ENCODE measurements at regions of chr10 and their contacts with region 1.

Region 1: DNA sequence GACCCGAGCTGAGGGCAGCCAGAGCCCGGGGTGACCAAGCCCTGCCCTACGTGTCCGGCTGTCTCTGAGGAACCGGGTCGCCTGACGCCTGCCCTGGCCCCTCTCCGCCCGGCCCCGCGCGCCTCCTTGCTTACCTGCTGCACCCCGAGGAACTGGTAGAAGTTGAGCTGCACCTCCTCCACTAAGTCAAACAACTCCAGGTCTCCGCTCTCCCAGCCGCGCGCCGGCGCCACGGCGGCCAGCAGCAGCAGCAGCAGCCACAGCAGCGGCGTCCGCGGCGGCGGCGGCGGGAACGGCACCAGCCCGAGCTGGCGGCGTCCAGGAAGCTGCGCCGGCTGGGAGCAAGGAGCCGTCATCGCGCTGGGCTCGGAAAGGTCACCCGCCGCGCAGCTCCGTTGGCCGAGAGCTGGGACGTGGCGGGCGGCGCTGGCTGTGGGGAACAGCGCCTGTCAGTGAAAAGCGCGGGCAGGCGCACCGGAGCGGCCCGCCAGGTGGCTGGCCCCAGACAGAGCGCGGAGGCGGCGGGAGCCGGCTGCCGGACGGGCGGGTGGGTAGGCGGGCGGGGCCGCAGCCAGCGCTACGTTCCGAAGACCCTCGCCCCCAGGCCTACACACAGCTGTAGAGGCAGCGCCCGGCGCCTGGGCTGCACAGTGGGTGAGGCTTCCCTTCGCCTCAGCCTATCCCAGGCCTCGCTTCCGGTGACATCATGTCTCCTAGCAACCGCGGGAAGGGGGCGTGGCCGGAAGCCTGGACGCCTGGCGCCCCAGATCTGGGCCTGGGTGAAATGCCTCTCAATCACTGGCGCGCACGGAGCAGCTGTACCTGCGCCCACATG is at the start of gene DNAJC1:
- DNase-seq: peak; percentile 97
- ATAC-seq: peak; percentile 93
- H3K4me3 ChIP-seq: peak within 1 kb of the TSS; percentile 57 to 90 (median 79)
- H3K4me3 Mint-ChIP-seq: peak within 1 kb of the TSS; percentile 90
- H3K27ac ChIP-seq: peak within 1 kb of the TSS; percentile 84
- H3K27ac Mint-ChIP-seq: peak within 1 kb of the TSS; percentile 91
- H3K4me1 ChIP-seq: peaks cover 30 to 31% of the 10 kb centered on the region in 2 donors
- H3K4me1 Mint-ChIP-seq: peaks cover 40% of the 10 kb centered on the region
- H3K27me3 ChIP-seq: no peaks in the 10 kb centered on the region
- H3K27me3 Mint-ChIP-seq: no peaks in the 10 kb centered on the region
- CTCF ChIP-seq: peak; percentile 31
- total RNA-seq, gene DNAJC1: 15.4 and 16.1 TPM in 2 replicates

Region 2: DNA sequence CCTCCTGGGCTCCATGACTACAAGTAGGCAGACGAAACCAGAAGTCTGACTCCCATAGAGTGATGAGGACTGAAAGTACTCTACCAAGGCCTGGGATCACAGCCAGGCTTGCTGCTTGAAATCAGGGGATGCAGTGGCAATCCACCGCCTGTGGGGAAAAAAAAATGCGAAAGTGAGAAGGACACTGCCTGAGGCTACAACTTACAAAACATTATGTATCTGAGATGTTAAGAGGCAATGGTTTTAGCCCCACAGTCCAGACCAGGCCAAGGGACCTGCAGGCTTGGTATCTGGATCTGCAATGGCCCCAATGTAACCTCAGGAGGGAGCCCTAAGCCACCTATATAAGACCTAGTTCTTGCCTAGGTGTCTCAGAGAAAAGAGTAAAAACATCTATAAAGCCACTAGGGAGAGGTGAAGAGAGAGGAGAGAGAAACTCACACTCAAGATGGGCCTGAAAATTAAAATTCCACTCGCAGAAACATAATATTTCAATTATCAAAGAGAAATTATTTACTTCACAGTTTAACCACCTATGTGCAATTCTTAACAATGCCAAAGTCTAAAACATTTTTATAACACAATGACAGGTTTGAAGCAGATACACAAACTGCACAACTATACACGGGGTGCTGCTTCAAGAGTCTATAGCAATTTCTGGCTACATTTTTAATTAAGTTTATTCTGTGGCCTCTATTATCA is 13.7 kb before region 1 on chr10:
- CTCF ChIA-PET with region 1: interaction called, 65 read pairs
- POLR2A ChIA-PET with region 1: no interaction called
- intact Hi-C with region 1: no loop called
- DNase-seq: peak; percentile 47
- ATAC-seq: peak; percentile 76
- H3K4me3 ChIP-seq: no peak overlapping the region
- H3K4me3 Mint-ChIP-seq: no peak overlapping the region
- H3K27ac ChIP-seq: no peak overlapping the region
- H3K27ac Mint-ChIP-seq: no peak overlapping the region
- H3K4me1 ChIP-seq: no peaks in the 10 kb centered on the region
- H3K4me1 Mint-ChIP-seq: peaks cover 4% of the 10 kb centered on the region
- H3K27me3 ChIP-seq: no peaks in the 10 kb centered on the region
- H3K27me3 Mint-ChIP-seq: no peaks in the 10 kb centered on the region
- CTCF ChIP-seq: peak; percentile 46

Region 3: DNA sequence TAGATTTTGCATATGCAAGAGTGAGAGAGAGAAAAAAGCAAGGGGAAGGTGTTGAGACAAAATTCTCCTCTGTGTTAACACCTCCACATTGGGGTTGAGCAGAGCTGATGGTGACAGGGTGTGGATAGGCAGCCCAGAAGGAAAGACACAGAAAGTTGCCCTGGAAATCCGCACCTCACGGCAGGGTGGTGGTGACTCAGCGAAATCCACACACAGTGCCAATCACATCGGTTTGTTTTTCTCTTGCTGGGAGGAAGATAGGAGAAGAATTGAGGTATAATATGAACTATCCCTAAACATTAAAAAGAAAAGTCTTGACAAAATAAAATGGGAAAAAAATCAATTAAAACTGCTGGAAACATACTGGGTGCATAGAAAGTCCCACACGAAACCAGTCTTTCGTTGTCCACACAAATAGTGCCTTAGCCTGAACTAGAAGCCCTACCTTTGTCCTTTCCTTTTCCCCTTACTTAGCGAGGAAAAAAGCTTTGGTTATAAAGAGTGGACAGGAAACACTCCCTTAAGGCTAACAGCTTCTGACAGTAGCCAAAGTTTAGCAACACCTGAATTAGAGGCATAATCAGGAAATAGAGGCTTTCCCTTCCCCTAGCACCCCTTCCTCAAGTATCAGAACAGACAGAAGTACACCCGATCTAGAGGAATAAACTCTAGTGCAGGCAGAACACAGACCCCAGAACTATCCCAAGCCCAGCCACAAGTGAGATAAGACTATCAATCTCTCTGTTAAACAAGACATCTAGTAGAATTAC is 39.4 kb after region 1 on chr10:
- CTCF ChIA-PET with region 1: no interaction called
- POLR2A ChIA-PET with region 1: no interaction called
- intact Hi-C with region 1: no loop called
- DNase-seq: no peak
- ATAC-seq: no peak
- H3K4me3 ChIP-seq: no peak overlapping the region
- H3K4me3 Mint-ChIP-seq: no peak overlapping the region
- H3K27ac ChIP-seq: no peak overlapping the region
- H3K27ac Mint-ChIP-seq: no peak overlapping the region
- H3K4me1 ChIP-seq: no peaks in the 10 kb centered on the region
- H3K4me1 Mint-ChIP-seq: no peaks in the 10 kb centered on the region
- H3K27me3 ChIP-seq: peaks cover 0 to 18% (median 4%) of the 10 kb centered on the region in 4 experiments
- H3K27me3 Mint-ChIP-seq: peaks cover 37% of the 10 kb centered on the region
- CTCF ChIP-seq: no peak

Region 4: GRCh38 chr10:22316285-22317120 is 313.2 kb after region 1 on chr10 and contains the start of gene COMMD3:
- CTCF ChIA-PET with region 1: interaction called, 3 read pairs
- POLR2A ChIA-PET with region 1: interaction called, 6 read pairs
- intact Hi-C with region 1: loop called (anchors 2 kb)
- DNase-seq: peak; percentile 95
- ATAC-seq: peak; percentile 56
- H3K4me3 ChIP-seq: peak within 1 kb of the TSS; percentile 65 to 90 (median 84)
- H3K4me3 Mint-ChIP-seq: peak within 1 kb of the TSS; percentile 97
- H3K27ac ChIP-seq: peak within 1 kb of the TSS; percentile 88 to 92
- H3K27ac Mint-ChIP-seq: peak within 1 kb of the TSS; percentile 98
- H3K4me1 ChIP-seq: peaks cover 21 to 34% of the 10 kb centered on the region in 2 donors
- H3K4me1 Mint-ChIP-seq: peaks cover 36% of the 10 kb centered on the region
- H3K27me3 ChIP-seq: no peaks in the 10 kb centered on the region
- H3K27me3 Mint-ChIP-seq: no peaks in the 10 kb centered on the region
- CTCF ChIP-seq: no peak
- total RNA-seq, gene COMMD3: 74.3 and 78.0 TPM in 2 replicates

Region 5: DNA sequence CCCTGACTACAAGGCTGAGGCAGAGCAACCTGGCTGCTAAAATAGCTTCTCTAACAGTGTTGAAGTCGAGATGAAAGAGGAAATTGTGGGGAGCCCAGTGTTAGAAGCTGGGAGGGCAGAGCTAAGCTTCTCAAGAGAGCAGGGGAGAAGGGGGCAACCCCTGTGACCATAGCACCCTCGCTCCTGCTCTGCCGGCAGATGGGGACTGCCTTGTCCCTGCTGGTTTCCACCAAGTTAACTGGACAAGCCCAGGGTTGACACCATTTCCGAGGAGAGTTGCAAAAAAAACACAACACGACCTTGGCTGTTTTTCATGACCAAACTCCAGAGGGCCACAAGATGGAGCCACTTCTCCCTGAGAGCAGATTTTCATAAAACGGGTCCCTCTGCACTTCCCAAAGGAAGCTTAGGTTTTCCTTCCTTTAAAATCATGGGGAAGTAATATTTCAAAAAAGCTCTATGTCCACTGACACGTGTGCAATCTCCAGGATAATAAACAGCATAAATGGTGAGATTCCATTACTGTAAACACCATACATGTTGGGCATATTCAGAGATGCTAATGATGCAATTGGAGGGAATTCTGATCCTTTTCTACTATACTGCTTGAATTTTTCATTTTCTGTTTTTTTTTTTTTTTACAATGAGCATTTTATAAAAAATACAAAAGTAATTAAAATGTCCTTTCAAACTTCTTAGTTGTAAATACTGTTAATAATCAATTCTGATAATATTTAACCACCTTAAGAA is 570.7 kb after region 1 on chr10:
- CTCF ChIA-PET with region 1: interaction called, 3 read pairs
- POLR2A ChIA-PET with region 1: no interaction called
- intact Hi-C with region 1: loop called (anchors 5 kb)
- DNase-seq: peak; percentile 69
- ATAC-seq: peak; percentile 36
- H3K4me3 ChIP-seq: no peak overlapping the region
- H3K4me3 Mint-ChIP-seq: no peak overlapping the region
- H3K27ac ChIP-seq: no peak overlapping the region
- H3K27ac Mint-ChIP-seq: peak overlapping the region; percentile 46
- H3K4me1 ChIP-seq: peaks cover 5 to 7% of the 10 kb centered on the region in 2 donors
- H3K4me1 Mint-ChIP-seq: peaks cover 7% of the 10 kb centered on the region
- H3K27me3 ChIP-seq: no peaks in the 10 kb centered on the region
- H3K27me3 Mint-ChIP-seq: no peaks in the 10 kb centered on the region
- CTCF ChIP-seq: peak; percentile 69

Region 6: GRCh38 chr10:23095404-23095965 is 1092.2 kb after region 1 on chr10 and contains the start of gene MSRB2:
- CTCF ChIA-PET with region 1: no interaction called
- POLR2A ChIA-PET with region 1: no interaction called
- intact Hi-C with region 1: loop called (anchors 1 kb)
- DNase-seq: peak; percentile 79
- ATAC-seq: peak; percentile 81
- H3K4me3 ChIP-seq: peak within 1 kb of the TSS; percentile 42 to 83 (median 58)
- H3K4me3 Mint-ChIP-seq: peak within 1 kb of the TSS; percentile 96
- H3K27ac ChIP-seq: peak within 1 kb of the TSS in 1 of 2 donors; percentile 64
- H3K27ac Mint-ChIP-seq: peak within 1 kb of the TSS; percentile 86
- H3K4me1 ChIP-seq: peaks cover 12% of the 10 kb centered on the region in 2 donors
- H3K4me1 Mint-ChIP-seq: peaks cover 22% of the 10 kb centered on the region
- H3K27me3 ChIP-seq: no peaks in the 10 kb centered on the region
- H3K27me3 Mint-ChIP-seq: no peaks in the 10 kb centered on the region
- CTCF ChIP-seq: no peak
- total RNA-seq, gene MSRB2: 3.0 and 3.5 TPM in 2 replicates

Measured in B cell (primary cell).